GM23248 (cell line): ENCODE measurements at regions of chr15 and their contacts with region 1.

Region 1: DNA sequence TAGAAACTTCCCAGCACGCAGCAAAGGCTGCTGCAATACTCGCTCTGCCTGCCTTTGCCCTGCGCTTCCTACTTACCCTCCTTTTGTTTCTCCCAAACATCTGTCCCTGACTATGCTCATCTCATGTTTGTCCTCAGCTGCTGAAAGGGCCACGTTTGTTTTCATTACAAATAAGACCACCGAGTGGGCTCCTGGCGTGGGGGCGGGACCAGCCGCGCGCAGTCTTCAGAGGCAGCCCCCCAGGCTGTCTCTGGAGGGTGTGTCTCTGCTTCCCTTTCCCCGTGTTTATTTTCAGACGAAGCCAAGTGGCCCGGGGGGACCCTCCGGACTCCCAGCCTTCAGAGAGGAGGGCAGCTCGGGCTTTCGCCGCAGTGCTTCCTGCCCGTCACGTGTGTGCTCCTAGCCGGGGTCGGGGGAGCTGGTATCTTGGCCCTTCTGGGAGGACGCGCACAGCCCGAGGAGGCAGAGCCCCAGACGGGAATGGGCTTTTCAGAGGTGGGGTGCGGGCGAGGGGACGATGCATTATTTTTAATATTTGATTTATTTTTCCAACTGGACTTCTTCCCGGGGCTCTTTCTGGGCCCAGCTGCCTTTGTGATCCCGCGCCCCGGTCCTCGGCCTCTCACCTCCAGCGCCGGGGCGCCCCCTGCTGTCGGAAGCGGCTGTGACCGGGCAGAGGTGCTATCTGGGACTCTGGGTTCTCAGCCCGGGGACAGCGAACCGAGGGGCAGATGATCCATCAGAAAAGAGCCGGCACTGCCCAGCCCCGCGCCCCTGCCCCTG is 70.0 kb upstream of the CGNL1 start:
- DNase-seq: peak; percentile 86
- H3K4me3 ChIP-seq: peak overlapping the region; percentile 79
- H3K27ac ChIP-seq: no peak overlapping the region
- H3K4me1 ChIP-seq: no peaks in the 10 kb centered on the region
- H3K27me3 ChIP-seq: no peaks in the 10 kb centered on the region

Region 2: DNA sequence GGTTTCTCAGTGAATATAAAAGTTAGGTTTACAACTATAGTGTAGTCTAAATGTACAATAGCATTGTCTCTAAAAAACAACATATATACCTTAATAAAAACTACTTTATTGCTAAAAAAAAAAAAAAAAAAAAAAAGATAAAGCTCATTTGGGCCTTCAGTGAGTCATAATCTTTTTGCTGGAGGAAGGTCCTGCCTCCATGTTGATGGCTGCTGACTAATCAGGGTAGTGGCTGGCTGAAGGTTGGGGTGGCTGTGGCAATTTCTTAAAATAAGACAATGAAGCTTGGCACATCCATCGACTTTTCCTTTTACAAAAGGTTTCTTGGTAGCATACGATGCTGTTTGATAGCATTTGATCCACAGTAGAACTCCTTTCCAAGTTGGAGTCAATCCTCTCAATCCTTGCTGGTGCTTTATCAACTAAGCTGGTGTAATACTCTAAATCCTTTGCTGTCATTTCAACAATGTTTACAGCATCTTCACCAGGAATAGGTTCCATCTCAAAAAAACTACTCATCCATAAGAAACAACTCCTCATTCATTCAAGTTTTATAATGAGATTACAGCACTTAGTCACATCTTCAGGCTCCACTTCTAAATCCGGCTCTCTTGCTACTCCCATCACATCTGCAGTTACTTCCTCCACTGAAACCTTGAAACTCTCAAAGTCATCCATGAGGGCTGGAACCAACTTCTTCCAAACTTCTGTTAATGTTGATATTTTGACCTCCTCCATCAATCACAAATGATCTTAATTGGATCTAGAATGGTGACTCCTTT is 586.4 kb before region 1 on chr15:
- in situ Hi-C with region 1: no loop called
- DNase-seq: peak; percentile 54
- H3K4me3 ChIP-seq: no peak overlapping the region
- H3K27ac ChIP-seq: no peak overlapping the region
- H3K4me1 ChIP-seq: 0 out of 2 replicates have a peak, but pooled peaks cover 2% of the 10 kb centered on the region
- H3K27me3 ChIP-seq: no peaks in the 10 kb centered on the region

Region 3: DNA sequence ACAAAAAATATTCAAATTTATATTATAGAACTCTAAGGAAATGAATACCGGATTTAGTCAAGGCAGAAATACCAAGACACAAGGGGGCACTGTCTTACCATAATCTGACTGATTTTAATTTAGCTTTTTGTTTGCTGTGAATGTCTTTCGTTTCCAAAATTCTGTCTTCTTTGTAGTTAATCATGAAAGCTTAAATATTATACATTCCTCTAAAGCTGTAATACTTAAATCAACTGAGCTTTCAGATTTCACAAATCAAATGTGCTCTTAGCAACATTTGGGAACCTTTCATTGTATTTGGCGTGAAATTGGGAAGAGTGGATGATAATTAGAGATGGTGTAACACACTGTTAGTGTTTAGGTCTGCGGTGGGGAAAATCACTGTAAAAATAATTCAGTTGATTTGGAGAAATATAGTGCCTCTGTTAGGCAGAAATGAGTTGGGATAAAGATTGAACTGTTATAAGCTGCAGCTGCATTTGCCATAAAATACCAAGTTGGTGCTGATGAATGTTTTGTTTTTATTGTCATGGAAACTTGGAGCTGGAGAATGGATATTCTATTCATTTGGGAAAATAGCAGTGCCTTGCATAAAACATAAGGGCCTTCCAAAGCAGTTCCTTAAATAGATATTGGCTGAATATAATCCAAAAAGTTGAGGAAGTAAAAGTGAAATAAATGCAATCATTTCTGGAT is 159.7 kb before region 1 on chr15:
- in situ Hi-C with region 1: loop called (anchors 10 kb)
- DNase-seq: peak; percentile 78
- H3K4me3 ChIP-seq: peak overlapping the region; percentile 62
- H3K27ac ChIP-seq: peak overlapping the region; percentile 48
- H3K4me1 ChIP-seq: peaks cover 33% of the 10 kb centered on the region
- H3K27me3 ChIP-seq: no peaks in the 10 kb centered on the region

Region 4: DNA sequence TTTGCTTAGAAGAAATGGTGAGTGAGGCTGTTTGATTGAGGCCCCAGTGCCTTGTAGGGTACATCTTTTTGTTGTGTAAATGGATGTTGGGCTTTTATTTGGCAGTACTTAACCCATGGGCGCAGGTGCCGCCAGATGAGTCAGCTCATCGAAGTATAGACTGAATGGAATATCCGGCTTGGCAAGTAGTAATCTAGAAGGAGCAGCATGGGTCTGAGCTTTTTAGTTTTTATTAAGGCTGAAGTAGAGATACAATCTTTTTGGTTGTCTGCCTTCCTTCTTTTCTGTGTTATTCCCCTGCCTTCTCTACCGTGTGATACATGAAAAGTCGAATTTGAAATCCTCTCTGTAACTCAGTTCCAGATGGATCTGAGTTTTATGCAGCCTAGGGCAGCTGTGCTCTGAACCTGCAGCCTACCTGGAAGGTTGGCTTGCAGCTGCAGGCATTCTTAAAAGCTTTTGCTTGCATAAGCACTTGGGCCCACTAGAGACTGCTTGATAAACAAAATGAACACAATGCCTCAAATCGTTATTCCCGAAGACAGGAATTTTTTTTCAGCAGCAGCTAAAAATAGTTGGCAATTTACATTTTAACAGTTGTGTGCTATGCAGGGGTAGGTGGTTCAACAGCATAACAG is 107.6 kb before region 1 on chr15:
- in situ Hi-C with region 1: no loop called
- DNase-seq: no peak
- H3K4me3 ChIP-seq: no peak overlapping the region
- H3K27ac ChIP-seq: no peak overlapping the region
- H3K4me1 ChIP-seq: no peaks in the 10 kb centered on the region
- H3K27me3 ChIP-seq: no peaks in the 10 kb centered on the region